AG04449 (cell line): ENCODE measurements at regions of chr11 and their contacts with region 1.

Region 1: GRCh38 chr11:75445315-75445953 is 12.4 kb upstream of the KLHL35 start:
- DNase-seq: no peak
- H3K4me3 ChIP-seq: no peak overlapping the region
- CTCF ChIP-seq: peak; percentile 90

Region 2: DNA sequence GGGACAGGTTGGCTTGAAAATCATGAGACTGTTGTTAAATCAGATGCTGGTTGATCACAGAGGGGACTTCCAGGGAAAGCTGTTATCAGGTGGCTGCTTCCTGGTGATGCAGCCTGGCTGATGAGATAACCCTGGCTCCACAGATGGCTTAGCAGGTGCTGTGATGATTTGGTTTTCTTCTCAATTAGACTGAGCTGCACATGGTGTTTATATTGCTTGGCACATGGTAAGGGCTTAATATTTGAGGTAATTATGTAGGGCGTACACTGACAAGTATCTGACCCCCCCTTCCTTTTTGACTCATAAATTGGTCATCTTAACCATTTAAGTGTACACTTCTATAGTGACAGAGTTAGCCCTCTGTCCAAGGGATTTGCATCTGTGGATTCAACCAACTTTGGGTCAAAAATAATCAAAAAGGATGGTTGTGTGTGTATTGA is 39.1 kb before region 1 on chr11:
- CTCF ChIA-PET with region 1: interaction called, 19 read pairs
- POLR2A ChIA-PET with region 1: no interaction called
- DNase-seq: no peak
- H3K4me3 ChIP-seq: no peak overlapping the region
- CTCF ChIP-seq: no peak

Region 3: GRCh38 chr11:75462117-75462812 is 16.8 kb after region 1 on chr11:
- CTCF ChIA-PET with region 1: interaction called, 10 read pairs
- POLR2A ChIA-PET with region 1: no interaction called
- DNase-seq: no peak
- H3K4me3 ChIP-seq: no peak overlapping the region
- CTCF ChIP-seq: no peak

Region 4: GRCh38 chr11:75525596-75526541 is 80.4 kb after region 1 on chr11 and contains the start of gene GDPD5:
- CTCF ChIA-PET with region 1: interaction called, 658 read pairs
- POLR2A ChIA-PET with region 1: no interaction called
- DNase-seq: no peak
- H3K4me3 ChIP-seq: peak within 1 kb of the TSS; percentile 80
- CTCF ChIP-seq: peak; percentile 62

Region 5: DNA sequence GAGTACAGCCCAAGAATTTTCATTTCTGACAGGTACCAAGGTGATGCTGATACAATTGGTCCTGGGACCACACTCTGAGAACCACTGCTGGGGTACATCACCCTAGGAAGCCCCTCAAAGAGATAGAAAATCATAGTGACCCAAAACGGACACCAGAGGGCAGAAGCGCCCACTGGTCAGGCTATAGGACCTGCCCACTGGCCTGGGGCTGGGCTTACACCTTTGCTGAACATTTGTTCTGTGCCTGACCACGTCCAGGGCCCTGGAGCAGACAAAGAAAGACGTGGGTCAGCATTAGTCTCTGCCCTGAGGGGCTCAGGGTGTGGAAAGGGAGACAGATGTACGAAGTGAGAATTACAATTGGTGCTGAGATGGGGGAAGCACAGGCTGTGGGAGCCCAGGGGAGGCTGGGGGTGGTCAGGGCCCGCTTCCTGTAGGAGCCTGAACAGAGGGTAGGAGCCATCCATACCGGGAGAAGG is 102.2 kb after region 1 on chr11:
- CTCF ChIA-PET with region 1: interaction called, 33 read pairs
- POLR2A ChIA-PET with region 1: no interaction called
- DNase-seq: no peak
- H3K4me3 ChIP-seq: no peak overlapping the region
- CTCF ChIP-seq: peak; percentile 72

Region 6: DNA sequence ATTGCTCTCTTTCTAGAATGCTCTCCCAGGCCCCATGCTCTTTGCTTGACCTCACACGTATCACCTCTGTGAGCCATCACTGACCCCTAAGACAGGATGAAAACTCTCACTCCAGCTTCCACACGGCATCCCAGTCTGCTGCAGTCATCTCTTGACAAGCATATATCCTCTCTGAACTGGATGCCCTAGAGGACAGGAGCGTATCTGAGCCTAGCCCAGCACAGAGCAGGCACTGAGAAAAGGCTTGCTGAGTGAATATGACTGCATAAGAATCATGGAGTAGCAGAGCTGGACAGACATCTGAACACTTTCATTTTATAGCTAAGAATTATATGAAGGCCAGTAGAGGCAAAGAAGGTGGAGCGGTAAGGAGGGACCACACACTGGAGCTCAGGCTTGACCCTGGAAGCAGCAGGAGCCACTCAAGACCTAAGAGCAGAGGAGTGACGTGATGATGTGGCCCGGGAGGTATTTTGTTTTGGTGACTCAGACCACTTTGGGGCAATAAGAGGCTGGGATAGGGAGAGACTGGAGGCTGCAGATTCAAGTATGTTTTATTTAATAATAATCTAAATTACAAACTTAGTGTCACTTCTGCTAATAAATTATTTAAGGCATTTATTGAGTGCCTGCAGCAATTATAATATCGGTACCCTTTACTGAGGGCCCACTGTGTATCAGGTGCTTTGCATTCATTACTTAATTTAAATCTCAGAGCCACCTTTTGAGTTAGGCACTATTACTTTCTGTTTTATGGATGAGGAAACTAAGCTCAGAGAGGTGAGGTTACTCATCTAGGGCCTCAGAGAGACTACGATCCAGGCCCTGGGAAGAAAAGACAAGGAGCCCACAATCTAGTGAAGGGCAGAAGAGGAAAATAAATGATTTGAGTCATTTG is 180.8 kb after region 1 on chr11:
- CTCF ChIA-PET with region 1: no interaction called
- POLR2A ChIA-PET with region 1: no interaction called
- DNase-seq: peak; percentile 44
- H3K4me3 ChIP-seq: no peak overlapping the region
- CTCF ChIP-seq: no peak